ENCODE measurements at regions of chr1 and their contacts with region 1.

Region 1: DNA sequence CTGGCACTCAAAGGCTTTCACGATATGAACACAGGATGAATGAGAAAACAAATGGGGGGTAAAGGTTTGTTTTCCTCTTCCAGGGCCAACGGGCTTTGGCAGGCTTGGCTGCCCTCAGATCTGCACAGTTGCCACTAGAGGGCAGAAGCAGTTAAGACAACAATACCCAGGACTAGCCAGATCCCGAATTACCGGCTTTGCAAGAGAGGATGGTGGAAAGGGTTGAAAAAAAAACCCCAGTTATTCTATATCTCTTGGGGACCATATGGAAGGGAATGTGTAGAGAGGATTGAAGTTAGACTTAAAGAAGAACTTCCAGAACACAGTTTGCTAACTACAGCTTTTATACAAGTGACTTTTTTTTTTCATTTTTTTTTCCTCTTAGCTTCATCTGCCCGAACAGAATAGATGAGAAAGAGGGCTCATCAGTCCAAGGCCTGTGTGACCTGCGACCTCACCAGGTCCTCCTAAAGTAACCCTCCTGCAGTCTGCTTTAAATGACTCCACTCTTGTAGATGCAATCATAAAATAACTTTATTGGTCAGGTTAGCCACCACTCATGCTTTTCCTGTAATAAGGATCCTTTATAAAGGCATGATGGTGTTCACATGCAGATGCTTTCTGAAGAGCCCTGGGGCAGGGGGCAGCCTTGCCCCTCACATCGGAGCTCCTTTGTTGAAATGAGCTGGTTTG is 10.7 kb downstream of the FMOD start:
- DNase-seq: peak; percentile 65
- ATAC-seq: peak; percentile 85 to 87
- H3K4me3 ChIP-seq: no peak overlapping the region
- H3K27ac ChIP-seq: no peak overlapping the region
- H3K4me1 ChIP-seq: peaks cover 33% of the 10 kb centered on the region
- H3K27me3 ChIP-seq: no peaks in the 10 kb centered on the region
- CTCF ChIP-seq: peak; percentile 91

Region 2: GRCh38 chr1:203057911-203058675 is 282.2 kb before region 1 on chr1:
- intact Hi-C with region 1: no loop called
- DNase-seq: no peak
- ATAC-seq: peak in 1 of 2 donors; percentile 18
- H3K4me3 ChIP-seq: no peak overlapping the region
- H3K27ac ChIP-seq: no peak overlapping the region
- H3K4me1 ChIP-seq: peaks cover 19% of the 10 kb centered on the region
- H3K27me3 ChIP-seq: no peaks in the 10 kb centered on the region
- CTCF ChIP-seq: no peak

Region 3: DNA sequence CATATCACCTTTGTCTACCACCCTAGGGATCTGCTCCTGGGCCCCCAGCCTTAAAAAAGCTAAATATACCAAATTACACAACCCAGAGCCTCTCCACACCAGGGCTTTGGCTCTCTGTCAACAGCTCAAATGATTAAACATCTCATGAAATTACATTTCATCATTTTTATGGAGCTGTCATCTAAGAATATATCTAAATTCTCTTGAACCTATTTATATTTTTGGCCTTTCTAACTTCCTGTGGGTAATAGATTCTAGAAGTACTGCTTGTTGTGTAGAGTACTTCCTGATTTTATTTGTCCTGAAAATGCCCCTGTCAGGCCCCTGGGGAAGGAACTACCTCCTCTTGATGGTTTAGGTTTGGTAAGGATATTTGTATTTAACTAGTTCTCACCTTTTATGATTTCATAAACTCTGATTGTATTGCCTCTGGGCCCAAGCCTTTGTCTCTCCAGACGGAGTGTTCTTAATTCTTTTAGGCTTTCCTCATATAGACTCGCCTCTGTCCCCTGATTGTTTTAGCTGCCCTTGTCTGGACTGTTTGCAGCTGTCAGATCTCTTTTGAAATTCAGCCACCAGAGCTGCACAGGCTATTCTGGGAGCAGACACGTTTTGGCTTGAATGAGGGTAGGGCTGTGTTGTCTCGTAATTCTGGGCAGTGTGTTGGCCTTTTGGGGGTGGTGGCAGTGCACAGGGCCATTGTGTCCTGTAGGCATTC is 271.1 kb before region 1 on chr1:
- intact Hi-C with region 1: no loop called
- DNase-seq: no peak
- ATAC-seq: peak; percentile 30 to 55
- H3K4me3 ChIP-seq: no peak overlapping the region
- H3K27ac ChIP-seq: peak overlapping the region; percentile 27
- H3K4me1 ChIP-seq: peaks cover 24% of the 10 kb centered on the region
- H3K27me3 ChIP-seq: no peaks in the 10 kb centered on the region
- CTCF ChIP-seq: no peak

Region 4: GRCh38 chr1:203273206-203273868 is 66.9 kb before region 1 on chr1:
- intact Hi-C with region 1: loop called (anchors 5 kb)
- DNase-seq: peak; percentile 92
- ATAC-seq: peak; percentile 86 to 88
- H3K4me3 ChIP-seq: peak overlapping the region; percentile 47
- H3K27ac ChIP-seq: peak overlapping the region; percentile 72
- H3K4me1 ChIP-seq: peaks cover 73% of the 10 kb centered on the region
- H3K27me3 ChIP-seq: no peaks in the 10 kb centered on the region
- CTCF ChIP-seq: peak; percentile 97

Region 5: DNA sequence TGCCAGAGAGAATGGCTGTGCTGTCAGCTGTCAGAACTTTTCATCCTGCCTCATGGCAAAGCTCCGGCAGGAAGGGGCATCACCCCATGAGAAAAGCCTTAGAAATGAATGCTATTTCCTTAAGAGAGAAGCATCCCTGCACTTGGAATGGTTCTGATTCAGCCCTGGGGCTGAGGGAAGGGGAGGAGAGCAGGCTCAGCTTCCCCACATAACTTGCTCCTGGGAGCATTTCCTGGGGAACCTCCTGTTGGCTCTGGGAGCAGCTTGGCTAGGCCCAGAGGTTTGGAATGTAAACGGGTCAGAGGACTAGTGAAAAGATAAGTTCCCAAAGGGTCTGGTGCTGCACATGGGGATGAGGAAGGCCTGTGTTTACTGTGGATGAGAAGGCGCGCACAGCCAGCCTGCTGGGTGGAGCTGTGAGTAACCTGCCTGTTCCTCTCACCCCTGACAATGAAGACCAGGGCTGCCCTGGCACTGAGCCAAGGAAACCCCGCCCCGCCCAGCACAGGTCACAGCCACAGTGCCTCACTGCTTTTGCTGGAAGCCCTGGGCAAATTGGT is 140.3 kb after region 1 on chr1:
- intact Hi-C with region 1: loop called (anchors 10 kb)
- DNase-seq: peak; percentile 65
- ATAC-seq: peak; percentile 77 to 81
- H3K4me3 ChIP-seq: peak overlapping the region; percentile 48
- H3K27ac ChIP-seq: peak overlapping the region; percentile 56
- H3K4me1 ChIP-seq: peaks cover 27% of the 10 kb centered on the region
- H3K27me3 ChIP-seq: no peaks in the 10 kb centered on the region
- CTCF ChIP-seq: no peak